ENCODE measurements at regions of chr7 and their contacts with region 1.

Region 1: GRCh38 chr7:112449902-112450806 is at the start of gene IFRD1:
- DNase-seq: peak; percentile 97
- H3K4me3 Mint-ChIP-seq: peak within 1 kb of the TSS; percentile 100
- H3K27ac Mint-ChIP-seq: peak within 1 kb of the TSS; percentile 99
- H3K4me1 Mint-ChIP-seq: peaks cover 38% of the 10 kb centered on the region
- H3K27me3 Mint-ChIP-seq: no peaks in the 10 kb centered on the region
- total RNA-seq, gene IFRD1: 26.5 to 28.6 TPM

Region 2: DNA sequence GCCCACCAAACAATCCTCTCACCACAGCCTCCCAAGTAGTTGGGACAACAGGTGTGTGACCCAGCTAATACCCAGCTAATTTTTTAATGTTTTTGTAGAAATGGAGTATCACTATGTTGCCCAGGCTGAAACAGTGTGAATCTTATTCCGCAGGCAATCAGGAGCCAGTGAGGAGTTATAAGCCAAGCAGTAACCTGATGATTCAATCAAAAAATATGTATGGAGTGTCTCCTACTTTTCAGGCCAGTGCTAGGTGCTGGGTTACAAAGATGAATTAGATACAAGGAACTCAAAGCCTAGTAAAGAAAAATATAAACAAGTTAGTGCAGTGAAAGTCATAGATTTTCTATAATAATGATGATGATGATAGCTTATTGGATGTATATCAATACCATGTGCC is 13.1 kb before region 1 on chr7:
- CTCF ChIA-PET with region 1: no interaction called
- POLR2A ChIA-PET with region 1: no interaction called
- DNase-seq: no peak
- H3K4me3 Mint-ChIP-seq: no peak overlapping the region
- H3K27ac Mint-ChIP-seq: no peak overlapping the region
- H3K4me1 Mint-ChIP-seq: no peaks in the 10 kb centered on the region
- H3K27me3 Mint-ChIP-seq: peaks cover 7% of the 10 kb centered on the region

Region 3: DNA sequence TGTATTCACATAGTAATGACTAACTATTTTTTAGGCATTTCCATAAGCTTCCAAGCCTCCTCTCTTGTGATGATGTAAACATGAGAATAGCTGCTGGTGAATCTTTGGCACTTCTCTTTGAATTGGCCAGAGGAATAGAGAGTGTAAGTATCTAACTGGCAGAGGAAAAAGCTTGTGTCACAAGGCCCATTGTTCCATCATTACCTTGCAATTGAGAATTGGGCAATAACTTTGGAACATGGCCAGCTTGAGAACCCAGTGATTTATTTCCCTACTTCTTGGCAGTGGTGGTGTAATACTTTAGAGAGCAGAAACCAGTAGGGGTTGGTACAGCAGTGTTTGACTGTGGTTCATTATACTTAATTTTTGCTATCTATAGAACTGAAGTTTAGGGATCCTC is 12.1 kb after region 1 on chr7:
- CTCF ChIA-PET with region 1: interaction called, 18 read pairs
- POLR2A ChIA-PET with region 1: no interaction called
- DNase-seq: no peak
- H3K4me3 Mint-ChIP-seq: no peak overlapping the region
- H3K27ac Mint-ChIP-seq: no peak overlapping the region
- H3K4me1 Mint-ChIP-seq: no peaks in the 10 kb centered on the region
- H3K27me3 Mint-ChIP-seq: no peaks in the 10 kb centered on the region

Region 4: GRCh38 chr7:112584290-112584689 is 134.1 kb after region 1 on chr7:
- CTCF ChIA-PET with region 1: no interaction called
- POLR2A ChIA-PET with region 1: no interaction called
- DNase-seq: no peak
- H3K4me3 Mint-ChIP-seq: no peak overlapping the region
- H3K27ac Mint-ChIP-seq: no peak overlapping the region
- H3K4me1 Mint-ChIP-seq: no peaks in the 10 kb centered on the region
- H3K27me3 Mint-ChIP-seq: peaks cover 12% of the 10 kb centered on the region

Region 5: DNA sequence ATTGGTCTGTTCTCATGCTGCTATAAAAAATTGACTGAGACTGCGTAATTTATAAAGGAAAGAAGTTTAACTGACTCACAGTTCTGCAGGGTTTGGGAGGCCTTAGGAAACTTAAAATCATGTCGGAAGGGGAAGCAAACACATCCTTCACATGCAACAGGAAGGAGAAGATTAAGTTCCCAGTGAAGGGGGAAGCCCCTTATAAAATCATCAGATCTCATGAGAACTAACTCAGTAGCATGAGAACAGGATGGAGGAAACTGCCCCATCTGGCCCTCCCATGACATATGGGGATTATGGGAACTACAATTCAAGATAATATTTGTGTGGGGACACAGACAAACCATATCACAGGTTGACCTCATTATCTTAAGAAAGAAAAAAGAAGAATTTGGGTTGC is 1334.2 kb after region 1 on chr7:
- CTCF ChIA-PET with region 1: no interaction called
- POLR2A ChIA-PET with region 1: no interaction called
- DNase-seq: no peak
- H3K4me3 Mint-ChIP-seq: no peak overlapping the region
- H3K27ac Mint-ChIP-seq: no peak overlapping the region
- H3K4me1 Mint-ChIP-seq: no peaks in the 10 kb centered on the region
- H3K27me3 Mint-ChIP-seq: no peaks in the 10 kb centered on the region

Measured in activated CD4-positive, alpha-beta T cell treated with anti-CD3 and anti-CD28 coated beads, Interleukin-2, amount 10 ng/mL, durations not matched to agents 7 days and 5 days (primary cell).